ENCODE measurements at regions of chr6 and their contacts with region 1.

Region 1: GRCh38 chr6:136967876-136968752 is 46.0 kb downstream of the SLC35D3 start:
- DNase-seq: peak; percentile 79
- ATAC-seq: peak; percentile 95
- H3K4me3 Mint-ChIP-seq: no peak overlapping the region
- H3K27ac Mint-ChIP-seq: no peak overlapping the region
- H3K4me1 Mint-ChIP-seq: peaks cover 21% of the 10 kb centered on the region
- H3K27me3 Mint-ChIP-seq: no peaks in the 10 kb centered on the region
- CTCF ChIP-seq: peak; percentile 57

Region 2: GRCh38 chr6:135974426-135974825 is 993.7 kb before region 1 on chr6:
- CTCF ChIA-PET with region 1: no interaction called
- POLR2A ChIA-PET with region 1: no interaction called
- DNase-seq: no peak
- ATAC-seq: no peak
- H3K4me3 Mint-ChIP-seq: no peak overlapping the region
- H3K27ac Mint-ChIP-seq: no peak overlapping the region
- H3K4me1 Mint-ChIP-seq: no peaks in the 10 kb centered on the region
- H3K27me3 Mint-ChIP-seq: no peaks in the 10 kb centered on the region
- CTCF ChIP-seq: no peak

Region 3: DNA sequence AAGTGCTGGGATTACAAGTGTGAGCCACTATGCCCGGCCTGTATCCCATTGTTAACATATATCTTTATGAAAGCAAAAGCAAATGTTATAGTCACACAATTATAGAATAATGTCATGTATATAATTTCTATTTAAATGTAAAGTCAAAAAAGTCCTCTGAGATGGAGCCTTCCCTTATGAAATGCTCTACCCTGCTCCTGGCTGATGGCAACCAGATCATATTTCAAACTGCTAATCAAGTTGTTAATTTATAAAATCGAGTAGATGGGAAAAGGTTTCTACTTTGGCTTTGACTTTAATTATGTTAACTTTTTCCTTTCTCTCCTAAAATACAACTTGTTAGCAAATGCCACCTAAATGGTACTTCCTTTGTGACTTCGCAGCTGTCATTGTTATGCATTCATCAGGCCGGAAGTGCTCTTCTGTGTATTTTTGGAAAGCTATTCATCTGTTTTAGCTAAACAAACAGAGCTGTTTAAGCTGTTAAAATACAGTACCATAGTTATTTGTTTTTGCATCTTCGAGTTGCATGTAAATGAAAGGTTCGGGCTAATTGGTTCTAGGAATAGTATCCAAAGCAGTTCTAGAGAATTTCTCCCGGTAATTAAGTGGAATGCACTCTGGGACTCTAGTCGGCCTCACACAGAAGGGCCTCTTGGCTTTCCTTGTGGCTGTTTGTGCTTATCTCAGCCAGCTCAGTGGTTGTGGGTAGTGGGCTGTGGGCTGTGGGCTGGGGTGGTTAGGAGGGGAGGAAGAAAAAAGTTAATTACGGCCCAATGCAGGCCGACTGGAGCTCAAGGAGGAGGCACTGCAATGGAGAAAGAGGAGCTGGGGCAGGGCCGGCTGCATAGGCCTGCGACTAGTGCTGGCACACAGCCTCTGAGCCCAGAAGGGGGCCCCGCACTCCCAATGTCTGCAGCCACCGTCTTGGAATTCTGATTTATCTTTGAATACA is 11.2 kb before region 1 on chr6:
- CTCF ChIA-PET with region 1: interaction called, 11 read pairs
- POLR2A ChIA-PET with region 1: no interaction called
- DNase-seq: peak; percentile 66
- ATAC-seq: peak; percentile 70
- H3K4me3 Mint-ChIP-seq: peak overlapping the region; percentile 38
- H3K27ac Mint-ChIP-seq: peak overlapping the region; percentile 99
- H3K4me1 Mint-ChIP-seq: peaks cover 72% of the 10 kb centered on the region
- H3K27me3 Mint-ChIP-seq: no peaks in the 10 kb centered on the region
- CTCF ChIP-seq: no peak

Region 4: DNA sequence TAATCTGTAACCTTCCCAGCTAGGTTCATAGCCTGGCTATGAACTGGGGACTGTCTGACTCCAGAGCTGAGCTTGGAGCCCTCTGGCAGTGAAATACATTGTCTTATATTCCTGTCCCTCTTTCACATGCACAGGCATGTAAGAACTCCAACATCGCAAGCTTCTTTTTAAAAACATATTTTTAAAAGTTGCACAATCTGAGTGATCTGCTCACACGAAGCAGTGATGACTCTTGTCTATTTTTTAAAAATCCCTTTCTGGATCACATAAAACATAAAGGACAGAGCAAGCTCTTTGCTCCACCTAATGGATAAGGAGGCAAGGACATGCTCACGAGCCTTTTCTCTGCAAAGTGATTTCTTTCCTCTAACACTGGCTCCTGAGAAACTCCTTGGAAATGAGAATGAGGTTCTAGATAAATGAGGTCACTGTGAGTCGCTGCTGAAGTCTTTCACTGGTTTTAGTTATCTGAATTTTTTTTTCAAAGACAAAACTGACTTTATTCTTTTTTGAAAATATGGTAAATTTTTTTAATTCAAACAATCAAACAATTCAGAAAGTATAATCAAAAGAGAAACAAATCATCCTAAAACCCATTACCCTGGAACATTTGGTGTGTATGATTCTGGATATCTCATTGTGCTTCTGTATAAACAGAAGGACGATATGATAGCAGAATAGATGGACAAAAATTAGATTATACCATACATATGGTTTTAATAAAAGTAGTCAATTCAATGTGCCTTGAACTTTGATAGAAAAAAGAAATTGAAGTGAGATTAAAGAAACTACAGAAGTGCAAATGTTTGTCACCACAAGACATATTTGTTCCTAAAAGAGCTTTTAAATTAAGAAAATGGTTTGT is 45.9 kb after region 1 on chr6:
- CTCF ChIA-PET with region 1: interaction called, 19 read pairs
- POLR2A ChIA-PET with region 1: no interaction called
- DNase-seq: no peak
- ATAC-seq: peak; percentile 95
- H3K4me3 Mint-ChIP-seq: no peak overlapping the region
- H3K27ac Mint-ChIP-seq: no peak overlapping the region
- H3K4me1 Mint-ChIP-seq: peaks cover 6% of the 10 kb centered on the region
- H3K27me3 Mint-ChIP-seq: no peaks in the 10 kb centered on the region
- CTCF ChIP-seq: no peak

Measured in WTC11 (cell line).